ENCODE measurements at regions of chr9 and their contacts with region 1.

Region 1: GRCh38 chr9:105157130-105157583 is 87.3 kb upstream of the SLC44A1 start:
- DNase-seq: peak; percentile 46 to 78 (median 70)
- ATAC-seq: peak; percentile 83 to 95 (median 90)
- H3K4me3 ChIP-seq: no peak overlapping the region
- H3K27ac ChIP-seq: peak overlapping the region in 1 of 12 donors; percentile 43
- H3K4me1 ChIP-seq: peaks cover 0 to 16% (median 0%) of the 10 kb centered on the region in 12 donors
- H3K27me3 ChIP-seq: no peaks in the 10 kb centered on the region
- CTCF ChIP-seq: peak; percentile 30 to 72 (median 55)
- POLR2A ChIP-seq: no peak

Region 2: GRCh38 chr9:104863180-104863883 is 293.8 kb before region 1 on chr9:
- intact Hi-C with region 1: loop called (anchors 1 to 5 kb)
- DNase-seq: peak in 2 of 5 donors; percentile 27 to 41
- ATAC-seq: peak; percentile 60 to 81 (median 68)
- H3K4me3 ChIP-seq: no peak overlapping the region
- H3K27ac ChIP-seq: peak overlapping the region in 2 of 12 donors; percentile 26 to 44
- H3K4me1 ChIP-seq: peaks cover 0 to 57% (median 27%) of the 10 kb centered on the region in 12 donors
- H3K27me3 ChIP-seq: no peaks in the 10 kb centered on the region
- CTCF ChIP-seq: peak; percentile 57 to 91 (median 77)
- POLR2A ChIP-seq: no peak

Region 3: DNA sequence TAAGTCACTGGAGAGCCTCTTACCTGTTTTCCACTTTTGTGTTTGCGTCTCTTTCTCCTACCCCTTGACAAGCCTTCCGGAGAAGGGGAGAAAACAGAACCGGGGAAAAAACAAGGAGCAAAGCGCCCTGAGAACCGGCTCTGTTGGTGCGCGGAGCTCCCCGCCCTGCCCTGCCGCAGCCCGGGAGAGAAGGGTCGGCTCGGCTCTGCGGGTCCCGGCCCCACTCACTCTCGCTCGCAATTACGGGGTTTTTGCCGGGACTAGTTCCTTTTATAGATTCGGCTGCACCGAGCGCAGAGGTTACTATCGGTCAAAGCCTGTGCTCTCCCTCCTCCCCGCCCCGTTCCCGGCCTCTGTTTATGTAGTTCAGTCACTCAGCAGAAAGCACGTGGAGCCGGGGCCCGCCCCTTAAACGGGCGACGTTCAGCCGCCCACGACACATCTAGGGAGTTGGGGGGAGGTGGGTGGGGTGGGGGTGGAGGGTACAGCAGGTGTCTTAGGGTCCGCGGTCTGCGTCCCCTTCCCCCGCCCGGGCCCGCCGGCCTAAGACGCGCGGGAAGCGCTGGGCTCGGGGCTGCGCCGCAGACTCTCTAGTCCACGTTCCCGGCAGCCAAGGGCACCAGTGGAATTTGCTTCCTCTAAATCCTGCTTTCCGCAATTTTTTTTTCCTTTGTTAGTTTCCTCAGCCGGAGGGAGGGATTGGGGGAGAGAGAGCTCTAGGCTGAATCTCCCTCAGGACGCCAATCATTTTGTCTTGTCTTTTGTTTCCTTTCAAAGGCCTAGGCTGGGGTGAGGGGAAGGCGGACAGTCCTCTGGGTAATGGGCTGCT is 229.0 kb before region 1 on chr9 and contains the start of gene ABCA1:
- intact Hi-C with region 1: loop called (anchors 1 to 5 kb)
- DNase-seq: peak; percentile 89 to 96 (median 93)
- ATAC-seq: peak; percentile 79 to 90 (median 87)
- H3K4me3 ChIP-seq: peak within 1 kb of the TSS; percentile 61 to 90 (median 74)
- H3K27ac ChIP-seq: peak within 1 kb of the TSS; percentile 71 to 95 (median 86)
- H3K4me1 ChIP-seq: peaks cover 0 to 38% (median 9%) of the 10 kb centered on the region in 12 donors
- H3K27me3 ChIP-seq: no peaks in the 10 kb centered on the region
- CTCF ChIP-seq: no peak
- POLR2A ChIP-seq: peak in 1 of 2 donors; percentile 77
- total RNA-seq, gene ABCA1: 5.2 to 45.3 (median 12.0) TPM

Region 4: DNA sequence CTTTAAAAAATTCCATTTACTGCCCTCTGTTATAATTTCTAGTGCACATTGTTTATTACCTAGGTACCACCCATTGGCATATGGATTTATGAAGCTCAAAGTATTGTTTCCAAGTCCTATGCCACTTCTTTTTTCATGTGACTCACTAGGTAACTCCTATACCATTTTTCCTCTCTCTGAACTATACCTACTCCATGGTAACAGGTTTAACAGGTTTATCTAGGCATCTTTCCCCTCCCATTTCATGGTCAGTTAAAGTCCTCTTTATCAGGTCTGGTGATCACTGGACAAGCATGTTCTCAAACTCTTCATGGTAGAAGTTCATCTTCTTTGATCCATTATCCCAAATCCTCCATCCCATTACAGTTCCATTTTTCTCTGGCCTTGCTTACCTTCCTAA is 179.5 kb before region 1 on chr9:
- intact Hi-C with region 1: loop called in 2 of 10 experiments (anchors 5 to 10 kb)
- DNase-seq: no peak
- ATAC-seq: no peak
- H3K4me3 ChIP-seq: no peak overlapping the region
- H3K27ac ChIP-seq: no peak overlapping the region
- H3K4me1 ChIP-seq: peaks cover 0 to 19% (median 0%) of the 10 kb centered on the region in 12 donors
- H3K27me3 ChIP-seq: no peaks in the 10 kb centered on the region
- CTCF ChIP-seq: no peak
- POLR2A ChIP-seq: no peak

Region 5: GRCh38 chr9:105064315-105065097 is 92.7 kb before region 1 on chr9:
- intact Hi-C with region 1: loop called in 2 of 10 experiments (anchors 5 to 10 kb)
- DNase-seq: peak; percentile 87 to 96 (median 93)
- ATAC-seq: peak; percentile 97 to 98 (median 98)
- H3K4me3 ChIP-seq: peak overlapping the region in 3 of 12 donors; percentile 8 to 29 (median 9)
- H3K27ac ChIP-seq: peak overlapping the region in 11 of 12 donors; percentile 55 to 92 (median 72)
- H3K4me1 ChIP-seq: peaks cover 7 to 38% (median 20%) of the 10 kb centered on the region in 12 donors
- H3K27me3 ChIP-seq: no peaks in the 10 kb centered on the region
- CTCF ChIP-seq: peak in 1 of 12 donors; percentile 10
- POLR2A ChIP-seq: peak in 1 of 2 donors; percentile 18

Region 6: DNA sequence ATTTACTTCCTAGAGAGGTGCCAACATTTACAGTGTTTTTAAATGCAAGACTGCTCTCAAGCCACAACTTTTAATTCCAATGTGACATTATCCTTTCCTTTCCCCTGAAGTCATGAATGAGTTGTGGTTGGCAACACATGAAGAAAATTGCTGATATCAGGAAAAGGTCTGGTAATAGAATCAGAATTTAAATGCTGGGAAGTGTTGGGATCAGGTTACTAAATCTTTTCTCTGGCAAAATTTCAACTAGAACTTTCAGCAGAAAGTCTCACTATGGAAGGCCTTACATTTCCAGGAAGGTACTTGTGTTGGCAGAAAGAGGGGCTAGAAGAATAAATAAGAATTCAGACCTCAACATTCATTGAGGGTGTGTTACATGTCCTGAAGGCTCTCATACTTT is 76.7 kb after region 1 on chr9:
- intact Hi-C with region 1: no loop called
- DNase-seq: no peak
- ATAC-seq: no peak
- H3K4me3 ChIP-seq: no peak overlapping the region
- H3K27ac ChIP-seq: no peak overlapping the region
- H3K4me1 ChIP-seq: no peaks in the 10 kb centered on the region
- H3K27me3 ChIP-seq: no peaks in the 10 kb centered on the region
- CTCF ChIP-seq: no peak
- POLR2A ChIP-seq: no peak

Region 7: DNA sequence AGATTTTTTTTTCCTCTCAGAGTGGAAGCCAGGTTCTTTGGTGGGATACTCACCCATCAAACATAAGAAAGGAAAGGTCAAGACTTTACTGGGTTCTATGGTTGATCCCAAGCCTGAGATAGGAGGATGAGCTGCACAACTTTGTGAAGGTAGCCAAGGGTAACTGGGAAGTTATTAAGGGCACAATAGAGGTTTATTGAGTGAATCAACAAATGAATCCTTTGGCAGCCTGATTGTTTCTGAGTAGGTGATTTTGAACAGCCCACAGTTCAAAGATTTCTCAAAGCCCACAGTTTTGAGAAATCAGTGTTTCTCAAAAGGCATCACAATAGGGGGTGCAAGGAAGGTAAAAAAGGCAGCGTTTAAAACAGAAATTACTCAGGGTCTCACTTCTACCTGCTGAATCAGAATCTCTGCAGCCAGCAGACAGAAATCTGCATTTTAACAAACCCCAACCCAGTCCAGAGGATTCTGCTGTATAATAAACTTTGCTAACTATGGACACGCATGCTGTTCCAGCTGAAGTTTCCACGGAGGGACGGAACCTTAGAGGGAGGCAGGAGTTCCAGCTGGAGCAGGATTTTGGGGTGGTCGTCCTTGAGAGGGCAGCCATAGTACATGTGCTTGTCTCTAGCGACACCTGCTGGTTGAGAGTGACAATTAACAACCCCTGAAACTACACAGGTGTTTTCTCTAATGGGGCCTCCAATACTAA is 257.9 kb after region 1 on chr9:
- intact Hi-C with region 1: loop called (anchors 1 to 5 kb)
- DNase-seq: peak in 3 of 5 donors; percentile 42 to 60 (median 49)
- ATAC-seq: peak; percentile 45 to 82 (median 69)
- H3K4me3 ChIP-seq: no peak overlapping the region
- H3K27ac ChIP-seq: no peak overlapping the region
- H3K4me1 ChIP-seq: peaks cover 0 to 5% (median 0%) of the 10 kb centered on the region in 12 donors
- H3K27me3 ChIP-seq: no peaks in the 10 kb centered on the region
- CTCF ChIP-seq: peak; percentile 77 to 94 (median 86)
- POLR2A ChIP-seq: no peak